ENCODE measurements at regions of chr17 and their contacts with region 1.

Region 1: GRCh38 chr17:42577532-42578281 is at the start of gene PSMC3IP:
- DNase-seq: peak; percentile 95
- H3K4me3 Mint-ChIP-seq: peak within 1 kb of the TSS; percentile 78
- H3K27ac Mint-ChIP-seq: peak within 1 kb of the TSS; percentile 80
- H3K4me1 Mint-ChIP-seq: peaks cover 24% of the 10 kb centered on the region
- H3K27me3 Mint-ChIP-seq: no peaks in the 10 kb centered on the region
- CTCF ChIP-seq: peak; percentile 26
- total RNA-seq, gene PSMC3IP: 10.3 and 12.0 TPM in 2 replicates

Region 2: GRCh38 chr17:42554250-42555121 is 23.2 kb before region 1 on chr17:
- CTCF ChIA-PET with region 1: interaction called, 3 read pairs
- POLR2A ChIA-PET with region 1: interaction called, 22 read pairs
- intact Hi-C with region 1: no loop called
- DNase-seq: peak; percentile 66
- H3K4me3 Mint-ChIP-seq: peak overlapping the region; percentile 91
- H3K27ac Mint-ChIP-seq: peak overlapping the region; percentile 89
- H3K4me1 Mint-ChIP-seq: peaks cover 7% of the 10 kb centered on the region
- H3K27me3 Mint-ChIP-seq: no peaks in the 10 kb centered on the region
- CTCF ChIP-seq: no peak

Region 3: GRCh38 chr17:42609182-42609813 is 31.6 kb after region 1 on chr17 and contains the starts of genes RETREG3 and TUBG1:
- CTCF ChIA-PET with region 1: interaction called, 18 read pairs
- POLR2A ChIA-PET with region 1: interaction called, 83 read pairs
- intact Hi-C with region 1: no loop called
- DNase-seq: peak; percentile 99
- H3K4me3 Mint-ChIP-seq: peak within 1 kb of the TSS; percentile 99
- H3K27ac Mint-ChIP-seq: peak within 1 kb of the TSS; percentile 91
- H3K4me1 Mint-ChIP-seq: peaks cover 13% of the 10 kb centered on the region
- H3K27me3 Mint-ChIP-seq: no peaks in the 10 kb centered on the region
- CTCF ChIP-seq: peak; percentile 34
- total RNA-seq, gene RETREG3: 45.2 and 46.0 TPM in 2 replicates
- total RNA-seq, gene TUBG1: 57.8 and 60.2 TPM in 2 replicates

Region 4: DNA sequence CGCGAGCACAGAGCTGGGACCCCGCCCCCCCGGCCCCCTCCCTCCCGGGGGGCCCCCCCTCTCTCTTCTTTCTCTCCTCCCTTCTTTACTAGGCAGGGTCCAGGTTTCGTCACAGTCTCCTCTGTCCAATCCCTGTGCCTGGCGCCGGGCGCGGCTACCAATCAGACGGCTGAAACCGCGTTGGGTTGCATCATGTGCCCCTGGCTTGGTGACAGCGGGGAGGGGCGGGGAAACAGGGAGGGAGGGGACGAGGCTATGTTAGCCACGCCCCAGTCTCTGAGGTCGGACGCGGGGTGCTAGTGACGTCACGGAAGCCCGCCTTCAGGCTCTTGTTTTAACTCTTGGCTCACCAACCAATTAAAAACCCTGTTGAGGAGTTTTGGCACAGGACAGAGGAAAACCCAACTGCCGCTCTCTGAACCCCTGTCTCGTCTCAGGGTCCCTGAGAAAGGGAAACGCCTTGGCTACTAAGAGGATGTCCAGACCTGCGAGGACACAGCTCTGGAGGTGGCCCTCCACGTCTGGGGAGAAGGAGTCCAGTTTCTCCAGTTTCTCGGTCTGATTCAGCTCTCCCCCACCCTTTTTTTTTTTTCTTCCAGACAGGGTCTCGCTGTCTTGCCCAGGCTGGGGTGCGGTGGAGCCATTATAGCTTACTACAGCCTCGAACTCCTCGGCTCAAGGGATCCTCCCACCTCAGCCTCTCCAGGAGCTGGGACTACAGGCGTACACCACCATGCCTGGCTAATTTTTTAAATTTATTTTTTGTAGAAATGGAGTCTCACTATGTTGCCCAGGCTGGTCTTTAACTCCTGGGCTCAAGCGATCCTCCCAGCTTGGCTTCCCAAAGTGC is 99.5 kb after region 1 on chr17:
- CTCF ChIA-PET with region 1: interaction called, 55 read pairs
- POLR2A ChIA-PET with region 1: interaction called, 57 read pairs
- intact Hi-C with region 1: loop called (anchors 1 kb)
- DNase-seq: peak; percentile 100
- H3K4me3 Mint-ChIP-seq: peak overlapping the region; percentile 86
- H3K27ac Mint-ChIP-seq: peak overlapping the region; percentile 42
- H3K4me1 Mint-ChIP-seq: peaks cover 22% of the 10 kb centered on the region
- H3K27me3 Mint-ChIP-seq: no peaks in the 10 kb centered on the region
- CTCF ChIP-seq: no peak

Region 5: GRCh38 chr17:42760652-42761581 is 183.2 kb after region 1 on chr17 and contains the start of gene RAMP2:
- CTCF ChIA-PET with region 1: interaction called, 12 read pairs
- POLR2A ChIA-PET with region 1: interaction called, 8 read pairs
- intact Hi-C with region 1: loop called (anchors 2 kb)
- DNase-seq: no peak
- H3K4me3 Mint-ChIP-seq: no peak within 1 kb of the TSS
- H3K27ac Mint-ChIP-seq: no peak within 1 kb of the TSS
- H3K4me1 Mint-ChIP-seq: peaks cover 5% of the 10 kb centered on the region
- H3K27me3 Mint-ChIP-seq: peaks cover 20% of the 10 kb centered on the region
- CTCF ChIP-seq: no peak
- total RNA-seq, gene RAMP2: not detected in 2 replicates

Measured in MCF 10A (cell line).